ENCODE measurements at regions of chr14 and their contacts with region 1.

Region 1: DNA sequence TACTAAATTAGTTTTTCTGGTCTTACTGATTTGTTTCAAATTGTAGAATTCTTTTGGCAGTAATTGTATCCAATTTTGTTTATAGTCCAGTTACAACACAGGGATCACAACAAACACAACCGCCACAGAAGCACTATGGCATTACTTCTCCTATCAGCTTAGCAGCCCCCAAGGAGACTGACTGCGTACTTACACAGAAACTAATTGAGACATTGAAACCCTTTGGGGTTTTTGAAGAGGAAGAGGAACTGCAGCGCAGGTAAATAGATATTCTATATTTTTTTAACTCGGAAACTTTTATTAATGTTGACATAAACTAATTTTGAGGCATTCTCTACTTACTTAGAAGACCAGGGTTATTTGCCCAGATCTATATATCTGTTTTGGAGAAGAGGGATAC is 17.8 kb downstream of the PAPOLA start:
- DNase-seq: no peak
- H3K4me3 ChIP-seq: no peak overlapping the region
- H3K27ac ChIP-seq: no peak overlapping the region
- H3K4me1 ChIP-seq: no peaks in the 10 kb centered on the region
- H3K27me3 ChIP-seq: no peaks in the 10 kb centered on the region
- CTCF ChIP-seq: no peak

Region 2: DNA sequence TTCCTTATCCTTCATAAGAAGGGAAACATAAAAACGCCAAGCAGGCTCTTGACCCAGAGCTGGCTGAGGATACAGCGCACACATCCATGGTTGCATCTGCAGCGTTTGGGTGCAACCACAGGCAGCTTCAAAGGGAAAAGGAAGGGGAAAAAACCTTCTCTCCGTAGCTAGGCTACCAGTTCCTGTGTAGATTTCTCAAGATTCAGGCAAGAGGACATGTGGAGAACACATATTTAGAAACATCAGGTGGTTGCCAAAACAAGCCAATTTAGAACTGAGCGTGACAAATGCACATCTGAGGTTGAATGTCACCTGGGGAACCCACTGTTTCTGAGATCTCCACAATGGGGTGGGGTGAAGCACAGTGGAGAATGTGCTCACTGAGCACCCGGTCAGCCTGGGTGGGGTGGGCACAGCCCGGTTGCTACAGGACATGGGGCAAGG is 393.6 kb before region 1 on chr14:
- CTCF ChIA-PET with region 1: no interaction called
- dilution Hi-C with region 1: no loop called
- in situ Hi-C with region 1: no loop called
- intact Hi-C with region 1: no loop called
- DNase-seq: no peak
- H3K4me3 ChIP-seq: no peak overlapping the region
- H3K27ac ChIP-seq: no peak overlapping the region
- H3K4me1 ChIP-seq: no peaks in the 10 kb centered on the region
- H3K27me3 ChIP-seq: no peaks in the 10 kb centered on the region
- CTCF ChIP-seq: no peak

Region 3: GRCh38 chr14:96538097-96538989 is 18.4 kb after region 1 on chr14:
- CTCF ChIA-PET with region 1: interaction called, 20 read pairs
- dilution Hi-C with region 1: no loop called
- in situ Hi-C with region 1: no loop called
- intact Hi-C with region 1: no loop called
- DNase-seq: no peak
- H3K4me3 ChIP-seq: no peak overlapping the region
- H3K27ac ChIP-seq: no peak overlapping the region
- H3K4me1 ChIP-seq: no peaks in the 10 kb centered on the region
- H3K27me3 ChIP-seq: no peaks in the 10 kb centered on the region
- CTCF ChIP-seq: no peak

Measured in mammary epithelial cell (primary cell).